CD4-positive, alpha-beta memory T cell (primary cell): ENCODE measurements at regions of chr10 and their contacts with region 1.

Region 1: GRCh38 chr10:63133056-63133820 is at the start of gene NRBF2:
- DNase-seq: peak; percentile 97 to 98 (median 98)
- H3K4me3 ChIP-seq: peak within 1 kb of the TSS; percentile 81 to 88
- H3K4me3 Mint-ChIP-seq: peak within 1 kb of the TSS; percentile 92 to 95 (median 92)
- H3K27ac ChIP-seq: peak within 1 kb of the TSS; percentile 96
- H3K27ac Mint-ChIP-seq: peak within 1 kb of the TSS; percentile 92 to 98 (median 97)
- H3K4me1 ChIP-seq: peaks cover 46% of the 10 kb centered on the region
- H3K4me1 Mint-ChIP-seq: peaks cover 24 to 45% (median 35%) of the 10 kb centered on the region in 4 donors
- H3K27me3 ChIP-seq: no peaks in the 10 kb centered on the region
- H3K27me3 Mint-ChIP-seq: peaks cover 0 to 7% of the 10 kb centered on the region in 2 donors
- total RNA-seq, gene NRBF2: 17.8 to 18.2 TPM

Region 2: DNA sequence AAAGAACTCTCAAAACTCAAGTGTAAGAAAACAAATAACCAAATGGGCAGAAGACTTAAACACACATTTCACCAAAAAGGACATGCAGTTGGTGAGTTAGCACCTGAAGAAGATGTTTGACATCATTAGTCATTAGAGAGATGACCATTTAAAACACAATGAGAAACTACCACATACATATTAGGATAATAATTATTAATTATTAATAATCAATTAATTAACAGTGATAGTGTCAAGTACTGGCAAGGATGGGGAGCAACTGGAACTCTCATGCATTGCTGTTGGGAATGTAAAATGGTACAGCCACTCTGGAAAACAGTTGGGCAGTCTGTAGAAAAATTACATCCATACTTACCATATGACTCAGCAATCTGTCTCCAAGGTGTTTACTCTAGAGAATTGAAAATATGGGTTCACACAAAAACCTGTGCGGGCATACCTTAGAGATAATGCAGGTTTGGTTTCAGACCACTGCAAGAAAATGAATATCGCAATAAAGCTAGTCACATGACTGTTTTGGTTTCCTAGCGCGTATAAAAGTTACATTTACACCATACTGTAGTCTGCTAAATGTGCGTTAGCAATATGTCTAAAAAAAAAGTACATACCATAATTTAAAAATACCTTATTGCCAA is 1201.5 kb before region 1 on chr10:
- CTCF ChIA-PET with region 1: no interaction called
- POLR2A ChIA-PET with region 1: no interaction called
- intact Hi-C with region 1: no loop called
- DNase-seq: no peak
- H3K4me3 ChIP-seq: no peak overlapping the region
- H3K4me3 Mint-ChIP-seq: peak overlapping the region in 1 of 8 donors; percentile 22
- H3K27ac ChIP-seq: no peak overlapping the region
- H3K27ac Mint-ChIP-seq: peak overlapping the region in 2 of 7 donors; percentile 7 to 13
- H3K4me1 ChIP-seq: peaks cover 31% of the 10 kb centered on the region
- H3K4me1 Mint-ChIP-seq: peaks cover 35 to 68% (median 40%) of the 10 kb centered on the region in 4 donors
- H3K27me3 ChIP-seq: no peaks in the 10 kb centered on the region
- H3K27me3 Mint-ChIP-seq: no peaks in the 10 kb centered on the region

Region 3: GRCh38 chr10:62632071-62632809 is 501.0 kb before region 1 on chr10:
- CTCF ChIA-PET with region 1: no interaction called
- POLR2A ChIA-PET with region 1: interaction called, 4 read pairs
- intact Hi-C with region 1: loop called (anchors 1 kb)
- DNase-seq: peak; percentile 66 to 90 (median 77)
- H3K4me3 ChIP-seq: peak overlapping the region in 1 of 2 donors; percentile 29
- H3K4me3 Mint-ChIP-seq: peak overlapping the region; percentile 22 to 80 (median 56)
- H3K27ac ChIP-seq: no peak overlapping the region
- H3K27ac Mint-ChIP-seq: peak overlapping the region; percentile 77 to 95 (median 87)
- H3K4me1 ChIP-seq: peaks cover 39% of the 10 kb centered on the region
- H3K4me1 Mint-ChIP-seq: peaks cover 14 to 34% (median 27%) of the 10 kb centered on the region in 4 donors
- H3K27me3 ChIP-seq: no peaks in the 10 kb centered on the region
- H3K27me3 Mint-ChIP-seq: no peaks in the 10 kb centered on the region

Region 4: GRCh38 chr10:62804356-62805230 is 328.6 kb before region 1 on chr10 and contains the start of gene ADO:
- CTCF ChIA-PET with region 1: no interaction called
- POLR2A ChIA-PET with region 1: interaction called, 10 read pairs
- intact Hi-C with region 1: loop called (anchors 1 kb)
- DNase-seq: peak; percentile 80 to 86 (median 83)
- H3K4me3 ChIP-seq: peak within 1 kb of the TSS; percentile 60 to 88
- H3K4me3 Mint-ChIP-seq: peak within 1 kb of the TSS; percentile 91 to 99 (median 96)
- H3K27ac ChIP-seq: peak within 1 kb of the TSS; percentile 83
- H3K27ac Mint-ChIP-seq: peak within 1 kb of the TSS; percentile 96 to 100 (median 99)
- H3K4me1 ChIP-seq: peaks cover 35% of the 10 kb centered on the region
- H3K4me1 Mint-ChIP-seq: peaks cover 22 to 45% (median 33%) of the 10 kb centered on the region in 4 donors
- H3K27me3 ChIP-seq: no peaks in the 10 kb centered on the region
- H3K27me3 Mint-ChIP-seq: no peaks in the 10 kb centered on the region
- total RNA-seq, gene ADO: 18.6 to 19.1 TPM

Region 5: GRCh38 chr10:62831346-62831745 is 301.9 kb before region 1 on chr10:
- CTCF ChIA-PET with region 1: no interaction called
- POLR2A ChIA-PET with region 1: no interaction called
- intact Hi-C with region 1: no loop called
- DNase-seq: no peak
- H3K4me3 ChIP-seq: no peak overlapping the region
- H3K4me3 Mint-ChIP-seq: no peak overlapping the region
- H3K27ac ChIP-seq: no peak overlapping the region
- H3K27ac Mint-ChIP-seq: no peak overlapping the region
- H3K4me1 ChIP-seq: no peaks in the 10 kb centered on the region
- H3K4me1 Mint-ChIP-seq: no peaks in the 10 kb centered on the region
- H3K27me3 ChIP-seq: no peaks in the 10 kb centered on the region
- H3K27me3 Mint-ChIP-seq: peaks cover 1 to 12% of the 10 kb centered on the region in 2 donors

Region 6: DNA sequence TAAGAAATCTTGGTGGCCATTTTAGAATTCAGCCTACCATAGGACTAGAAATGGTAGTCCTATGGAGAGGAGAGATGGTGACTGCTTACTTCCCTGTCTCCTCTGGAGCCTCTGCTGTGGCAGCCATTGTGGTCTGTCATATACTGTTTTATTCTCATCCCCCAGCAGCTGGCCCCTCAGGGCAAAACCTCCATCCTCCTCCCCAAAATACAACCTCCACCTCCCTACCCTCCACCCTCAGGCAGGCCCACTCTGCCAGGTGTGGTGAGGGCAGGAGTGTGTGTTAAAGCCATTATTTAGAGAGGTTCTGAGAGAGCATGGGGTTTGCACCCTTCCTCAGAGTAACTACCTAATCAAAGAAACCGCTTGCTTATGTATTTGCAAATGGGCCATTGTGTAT is 10.2 kb before region 1 on chr10:
- CTCF ChIA-PET with region 1: no interaction called
- POLR2A ChIA-PET with region 1: no interaction called
- intact Hi-C with region 1: no loop called
- DNase-seq: no peak
- H3K4me3 ChIP-seq: no peak overlapping the region
- H3K4me3 Mint-ChIP-seq: no peak overlapping the region
- H3K27ac ChIP-seq: no peak overlapping the region
- H3K27ac Mint-ChIP-seq: no peak overlapping the region
- H3K4me1 ChIP-seq: no peaks in the 10 kb centered on the region
- H3K4me1 Mint-ChIP-seq: peaks cover 0 to 1% (median 0%) of the 10 kb centered on the region in 4 donors
- H3K27me3 ChIP-seq: no peaks in the 10 kb centered on the region
- H3K27me3 Mint-ChIP-seq: peaks cover 4% of the 10 kb centered on the region in 2 donors

Region 7: DNA sequence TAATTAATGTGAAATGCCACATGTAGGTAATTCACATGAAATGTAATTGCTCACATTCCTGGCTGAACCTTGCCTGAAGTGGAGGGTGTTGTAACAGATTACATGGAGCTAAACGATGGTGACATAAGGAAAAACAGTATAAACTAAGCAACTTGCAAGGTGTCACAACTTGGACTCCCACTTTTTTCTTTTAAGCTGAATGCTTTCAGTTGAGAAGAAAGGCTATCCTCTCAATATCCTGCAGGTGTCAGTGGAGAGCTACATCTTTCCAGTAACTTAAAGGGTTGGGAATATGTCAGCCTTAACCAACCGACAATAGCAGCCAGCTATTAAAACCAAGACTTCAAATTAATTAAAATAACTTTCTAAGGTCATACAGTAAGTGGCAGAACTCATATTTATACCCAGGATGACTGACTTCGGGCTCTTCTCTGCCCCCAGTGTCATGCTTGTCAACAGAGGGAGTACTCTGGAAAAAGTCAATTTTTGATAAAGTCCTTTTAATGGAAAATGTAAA is 33.6 kb after region 1 on chr10:
- CTCF ChIA-PET with region 1: interaction called, 19 read pairs
- POLR2A ChIA-PET with region 1: interaction called, 8 read pairs
- intact Hi-C with region 1: no loop called
- DNase-seq: peak; percentile 50 to 61 (median 56)
- H3K4me3 ChIP-seq: no peak overlapping the region
- H3K4me3 Mint-ChIP-seq: no peak overlapping the region
- H3K27ac ChIP-seq: no peak overlapping the region
- H3K27ac Mint-ChIP-seq: peak overlapping the region in 2 of 7 donors; percentile 36 to 67
- H3K4me1 ChIP-seq: no peaks in the 10 kb centered on the region
- H3K4me1 Mint-ChIP-seq: peaks cover 0 to 2% (median 1%) of the 10 kb centered on the region in 4 donors
- H3K27me3 ChIP-seq: no peaks in the 10 kb centered on the region
- H3K27me3 Mint-ChIP-seq: no peaks in the 10 kb centered on the region